ENCODE measurements at regions of chr20 and their contacts with region 1.

Region 1: DNA sequence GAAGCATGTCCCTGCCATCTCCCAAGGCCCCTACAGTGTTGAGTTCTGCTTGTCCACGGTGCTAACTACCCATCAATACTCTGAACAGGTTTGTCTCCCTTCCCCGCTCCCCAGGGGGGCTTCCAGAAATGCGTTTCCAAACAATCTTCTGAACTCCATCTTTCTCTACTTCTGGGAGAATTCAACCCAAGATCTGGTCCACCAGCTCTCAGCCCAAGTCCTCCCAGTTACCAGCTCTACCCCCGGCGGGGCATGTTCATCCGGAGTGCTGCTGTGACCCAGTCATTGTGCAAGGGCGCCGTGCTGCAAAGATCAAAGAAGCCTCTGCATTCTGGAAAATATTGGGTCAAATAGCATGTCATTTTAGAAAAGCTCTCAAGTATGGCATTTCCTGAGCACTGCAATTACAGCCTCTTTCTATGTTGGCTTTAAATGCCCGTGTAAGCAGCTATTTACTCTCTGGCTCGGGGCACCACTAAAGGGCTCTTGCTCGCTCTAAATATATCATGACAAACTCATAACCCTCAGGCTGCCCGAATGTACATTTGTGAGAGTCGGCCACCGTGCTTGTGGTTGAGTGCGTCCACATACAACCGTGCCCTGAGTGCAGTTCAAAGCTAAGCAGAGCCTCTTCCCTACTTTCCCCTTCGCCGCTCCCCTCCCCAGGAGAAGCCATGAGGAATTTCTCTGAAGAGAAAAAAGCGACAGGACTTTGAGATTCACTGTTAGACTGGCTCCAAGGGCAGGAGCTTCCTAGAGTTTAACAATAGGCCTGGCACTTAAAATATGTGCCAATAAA is 71.6 kb downstream of the BANF2 start:
- DNase-seq: peak; percentile 97
- ATAC-seq: peak; percentile 93
- H3K4me3 ChIP-seq: peak overlapping the region; percentile 26 to 59 (median 39)
- H3K27ac ChIP-seq: peak overlapping the region; percentile 79
- H3K4me1 ChIP-seq: peaks cover 39% of the 10 kb centered on the region
- H3K27me3 ChIP-seq: no peaks in the 10 kb centered on the region
- CTCF ChIP-seq: no peak
- EP300 ChIP-seq: peak; percentile 48 to 86; a peak in 1 of 4 replicates
- POLR2A ChIP-seq: peak in 1 of 2 experiments; percentile 52; a peak in 2 of 4 replicates
- RAD21 ChIP-seq: peak; percentile 22; the same call in 1 of the 2 replicates

Region 2: DNA sequence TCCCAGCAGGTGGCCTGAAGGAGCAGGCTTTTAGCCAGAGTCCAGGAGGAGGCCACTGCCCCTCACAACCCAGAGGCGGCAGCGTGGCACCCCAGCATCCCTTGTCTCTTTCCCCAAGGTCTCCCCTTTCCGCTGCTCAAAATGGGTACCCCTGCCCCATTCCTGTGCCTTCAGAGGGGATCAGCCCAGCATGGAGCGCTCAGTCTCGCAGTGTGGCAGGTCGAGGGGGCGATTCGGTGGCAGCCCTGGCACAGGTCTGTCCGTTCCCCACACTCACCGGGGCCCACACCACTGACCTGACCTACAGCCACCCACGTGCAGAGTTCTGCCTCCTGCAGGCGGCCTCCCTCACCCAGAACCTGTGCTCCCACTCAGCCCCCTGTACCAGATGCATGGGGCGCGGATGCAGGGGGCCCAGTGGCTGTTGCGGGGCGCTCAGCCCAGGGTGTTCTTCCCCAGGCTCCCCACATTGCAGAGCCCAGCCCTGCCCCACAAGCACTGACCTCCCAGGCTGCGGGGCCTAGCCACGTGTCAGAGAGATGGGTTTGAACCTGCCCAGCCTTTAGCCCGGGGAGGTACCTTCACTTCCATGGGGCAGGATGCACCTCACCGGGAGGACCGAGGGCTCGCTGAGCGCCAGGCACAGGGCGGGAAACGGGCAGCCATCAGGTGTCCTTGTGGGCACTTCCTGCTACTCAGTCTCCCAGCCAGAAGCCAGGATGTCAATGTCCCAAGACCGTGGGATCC is 159.7 kb before region 1 on chr20:
- CTCF ChIA-PET with region 1: no interaction called
- POLR2A ChIA-PET with region 1: no interaction called
- in situ Hi-C with region 1: no loop called
- intact Hi-C with region 1: no loop called
- DNase-seq: peak; percentile 65
- ATAC-seq: peak; percentile 14
- H3K4me3 ChIP-seq: no peak overlapping the region
- H3K27ac ChIP-seq: peak overlapping the region; percentile 32
- H3K4me1 ChIP-seq: peaks cover 22% of the 10 kb centered on the region
- H3K27me3 ChIP-seq: no peaks in the 10 kb centered on the region
- CTCF ChIP-seq: peak; percentile 79
- EP300 ChIP-seq: no peak
- POLR2A ChIP-seq: peak in 1 of 2 experiments; percentile 56; a peak in 1 of 4 replicates
- RAD21 ChIP-seq: peak; percentile 81

Region 3: DNA sequence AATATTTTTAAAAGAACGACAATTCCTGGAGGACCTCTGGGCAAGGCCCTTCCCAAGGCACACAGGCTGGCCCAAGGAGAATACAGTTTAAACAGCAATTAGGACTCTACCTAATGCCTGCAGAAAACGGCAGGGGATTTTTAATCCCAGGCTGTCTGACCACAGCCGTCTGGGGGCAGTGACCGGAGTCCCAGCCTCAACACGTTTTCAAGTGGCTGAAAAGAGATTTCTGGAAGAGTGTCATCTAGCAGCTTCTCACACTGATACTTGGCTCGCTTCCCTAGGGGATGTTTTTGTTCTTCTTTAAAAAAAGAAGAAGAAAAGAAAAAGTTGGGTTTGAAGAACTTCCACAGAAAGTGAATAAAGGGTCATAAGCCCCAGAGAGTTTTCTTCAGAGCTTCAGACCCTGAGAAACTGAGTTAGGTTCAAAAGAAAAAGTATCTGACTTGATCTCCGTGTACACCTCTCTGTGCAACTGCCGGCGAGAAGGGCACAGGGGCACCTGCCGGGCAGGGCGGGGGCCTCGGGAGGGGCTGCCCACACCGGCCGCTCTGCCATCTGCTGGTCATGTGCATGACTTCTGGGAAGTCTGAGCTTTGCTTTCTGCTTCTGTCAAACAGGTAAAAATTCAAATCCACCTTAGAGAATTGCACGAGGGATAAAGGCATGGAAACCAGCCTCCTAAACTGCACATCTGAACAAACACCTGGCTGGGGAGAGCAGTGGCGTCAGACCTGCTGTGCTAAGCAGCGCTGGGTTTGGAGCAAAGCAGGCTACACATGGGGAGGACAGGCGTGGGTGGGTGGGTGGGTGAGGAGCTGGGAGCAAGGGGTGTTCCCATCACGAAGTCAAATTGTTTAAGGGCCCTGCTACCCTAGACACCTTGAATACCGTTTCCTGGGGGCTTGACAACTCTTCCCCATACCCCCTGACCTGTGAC is 122.3 kb before region 1 on chr20:
- CTCF ChIA-PET with region 1: no interaction called
- POLR2A ChIA-PET with region 1: no interaction called
- in situ Hi-C with region 1: no loop called
- intact Hi-C with region 1: no loop called
- DNase-seq: no peak
- ATAC-seq: peak; percentile 13
- H3K4me3 ChIP-seq: no peak overlapping the region
- H3K27ac ChIP-seq: no peak overlapping the region
- H3K4me1 ChIP-seq: peaks cover 40% of the 10 kb centered on the region
- H3K27me3 ChIP-seq: no peaks in the 10 kb centered on the region
- CTCF ChIP-seq: peak; percentile 61
- EP300 ChIP-seq: no peak
- POLR2A ChIP-seq: no peak; a peak in 1 of 4 replicates
- RAD21 ChIP-seq: peak; percentile 37; the same call in 1 of the 2 replicates

Region 4: DNA sequence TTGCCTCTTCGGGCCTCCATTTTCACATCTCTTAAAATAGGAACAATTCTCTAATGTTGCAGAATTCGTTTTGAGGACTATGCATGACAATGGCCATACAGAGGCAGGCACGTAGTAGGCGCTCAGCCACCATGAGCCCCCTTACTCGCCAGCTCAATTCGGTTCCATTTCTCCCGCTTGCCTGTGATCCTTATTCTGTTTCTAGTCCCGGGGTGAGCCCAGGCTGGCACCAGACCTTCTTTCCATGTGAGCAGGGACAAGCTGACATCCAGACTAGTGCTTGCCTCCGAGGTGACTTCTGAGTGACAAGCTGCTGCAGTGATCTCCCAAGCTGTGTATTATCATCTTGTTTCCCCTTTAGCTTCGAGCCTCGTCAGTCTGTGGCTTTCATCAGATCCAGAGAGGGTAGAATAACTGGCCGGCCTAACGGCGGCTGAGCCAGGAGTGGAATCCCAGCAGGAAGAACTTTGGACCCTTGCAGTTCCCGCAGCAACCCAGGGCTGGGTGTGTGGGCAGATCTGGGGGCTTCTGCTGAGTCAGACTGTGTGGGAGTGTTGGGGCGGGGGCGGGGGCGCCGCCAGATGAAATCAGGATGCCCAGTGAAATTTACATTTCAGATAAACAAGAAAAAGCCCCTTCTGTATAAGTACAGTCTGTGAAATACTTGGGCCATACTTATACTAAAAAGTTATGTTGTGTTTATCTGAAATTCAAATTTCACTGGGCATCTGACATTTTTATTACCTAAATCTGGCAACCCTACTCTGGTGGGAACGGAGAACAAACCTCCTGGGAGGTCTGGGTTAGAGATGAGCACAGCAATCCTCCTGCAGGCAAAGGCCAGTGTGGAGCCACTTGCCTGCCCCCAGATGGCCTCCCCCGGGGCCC is 60.8 kb before region 1 on chr20:
- CTCF ChIA-PET with region 1: no interaction called
- POLR2A ChIA-PET with region 1: interaction called, 13 read pairs
- in situ Hi-C with region 1: no loop called
- intact Hi-C with region 1: no loop called
- DNase-seq: peak; percentile 92
- ATAC-seq: peak; percentile 93
- H3K4me3 ChIP-seq: peak overlapping the region; percentile 36 to 70 (median 54)
- H3K27ac ChIP-seq: peak overlapping the region; percentile 43
- H3K4me1 ChIP-seq: peaks cover 75% of the 10 kb centered on the region
- H3K27me3 ChIP-seq: peaks cover 2 to 23% of the 10 kb centered on the region in 2 experiments; a peak in 2 of 5 replicates
- CTCF ChIP-seq: 0 out of 2 replicates have a peak, but pooled peaks have one; percentile 6
- EP300 ChIP-seq: peak in 1 of 2 experiments; percentile 66; a peak in 2 of 4 replicates
- POLR2A ChIP-seq: peak; percentile 59 to 61; a peak in 3 of 4 replicates
- RAD21 ChIP-seq: peak; percentile 31; the same call in 1 of the 2 replicates

Region 5: DNA sequence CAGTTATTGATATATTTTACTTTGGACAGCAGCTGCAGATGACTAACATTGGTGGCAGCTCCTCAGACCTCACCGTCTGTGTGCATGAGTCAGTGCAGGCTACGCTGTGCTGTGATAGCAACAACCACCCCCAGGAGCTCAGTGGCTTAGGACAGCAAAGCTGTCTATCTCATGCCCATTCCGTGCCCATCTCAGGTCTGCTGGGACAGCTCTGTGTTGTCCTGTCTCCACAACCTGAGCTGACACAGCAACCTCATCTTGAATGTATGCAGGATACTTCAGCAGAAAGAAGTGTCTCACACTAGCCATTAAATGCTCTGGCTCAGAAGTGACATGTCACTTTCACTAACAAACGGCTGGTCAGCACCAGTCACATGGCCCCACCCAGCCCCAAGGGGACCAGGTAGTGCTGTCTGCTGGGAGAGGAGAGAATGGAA is 24.0 kb before region 1 on chr20:
- CTCF ChIA-PET with region 1: no interaction called
- POLR2A ChIA-PET with region 1: interaction called, 8 read pairs
- in situ Hi-C with region 1: no loop called
- intact Hi-C with region 1: loop called (anchors 1 kb)
- DNase-seq: peak; percentile 34
- ATAC-seq: peak; percentile 82
- H3K4me3 ChIP-seq: no peak overlapping the region
- H3K27ac ChIP-seq: no peak overlapping the region
- H3K4me1 ChIP-seq: peaks cover 54% of the 10 kb centered on the region
- H3K27me3 ChIP-seq: peaks cover 1 to 24% of the 10 kb centered on the region in 2 experiments; a peak in 3 of 5 replicates
- CTCF ChIP-seq: no peak
- EP300 ChIP-seq: no peak
- POLR2A ChIP-seq: no peak
- RAD21 ChIP-seq: no peak

Region 6: DNA sequence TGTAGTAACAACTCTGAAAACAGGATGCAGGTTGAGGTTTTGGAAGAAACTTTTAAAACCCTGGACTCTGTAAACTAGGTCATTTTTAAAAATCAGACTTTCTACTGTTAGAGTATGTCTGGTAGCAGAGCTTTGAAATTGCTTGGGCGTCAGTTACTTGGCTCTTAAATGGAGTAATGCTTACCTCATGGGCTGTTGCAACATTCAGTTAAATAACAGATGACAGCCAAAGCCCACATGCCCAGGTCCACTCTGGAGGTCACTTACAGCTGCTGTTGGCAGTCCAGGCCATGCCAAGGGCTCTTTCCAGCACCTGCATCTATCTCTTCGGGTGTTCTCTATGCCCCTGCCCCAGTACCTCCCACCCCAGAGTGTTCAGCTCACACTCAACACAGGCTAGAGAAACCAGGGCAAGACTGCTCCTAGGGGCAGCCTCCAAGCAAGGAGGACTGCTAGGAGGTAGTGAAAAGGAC is 24.7 kb after region 1 on chr20:
- CTCF ChIA-PET with region 1: no interaction called
- POLR2A ChIA-PET with region 1: interaction called, 9 read pairs
- in situ Hi-C with region 1: no loop called
- intact Hi-C with region 1: loop called (anchors 1 kb)
- DNase-seq: peak; percentile 82
- ATAC-seq: peak; percentile 86
- H3K4me3 ChIP-seq: no peak overlapping the region
- H3K27ac ChIP-seq: no peak overlapping the region
- H3K4me1 ChIP-seq: peaks cover 32% of the 10 kb centered on the region
- H3K27me3 ChIP-seq: peaks cover 3 to 42% of the 10 kb centered on the region in 2 experiments; a peak in 4 of 5 replicates
- CTCF ChIP-seq: no peak
- EP300 ChIP-seq: peak; percentile 76 to 84; a peak in 3 of 4 replicates
- POLR2A ChIP-seq: no peak
- RAD21 ChIP-seq: no peak

Region 7: GRCh38 chr20:17859616-17860232 is 88.3 kb after region 1 on chr20:
- CTCF ChIA-PET with region 1: no interaction called
- POLR2A ChIA-PET with region 1: interaction called, 61 read pairs
- in situ Hi-C with region 1: no loop called
- intact Hi-C with region 1: loop called (anchors 1 kb)
- DNase-seq: no peak
- ATAC-seq: no peak; the same call in 1 of the 3 replicates
- H3K4me3 ChIP-seq: peak overlapping the region in 1 of 3 experiments; percentile 17; a peak in 2 of 6 replicates
- H3K27ac ChIP-seq: peak overlapping the region; percentile 86
- H3K4me1 ChIP-seq: peaks cover 100% of the 10 kb centered on the region
- H3K27me3 ChIP-seq: no peaks in the 10 kb centered on the region
- CTCF ChIP-seq: peak; percentile 53
- EP300 ChIP-seq: no peak
- POLR2A ChIP-seq: no peak
- RAD21 ChIP-seq: peak; percentile 34; the same call in 1 of the 2 replicates